Activated CD4-positive, alpha-beta memory T cell treated with anti-CD3 and anti-CD28 coated beads for 36 hours (primary cell): ENCODE measurements at regions of chr1 and their contacts with region 1.

Region 1: DNA sequence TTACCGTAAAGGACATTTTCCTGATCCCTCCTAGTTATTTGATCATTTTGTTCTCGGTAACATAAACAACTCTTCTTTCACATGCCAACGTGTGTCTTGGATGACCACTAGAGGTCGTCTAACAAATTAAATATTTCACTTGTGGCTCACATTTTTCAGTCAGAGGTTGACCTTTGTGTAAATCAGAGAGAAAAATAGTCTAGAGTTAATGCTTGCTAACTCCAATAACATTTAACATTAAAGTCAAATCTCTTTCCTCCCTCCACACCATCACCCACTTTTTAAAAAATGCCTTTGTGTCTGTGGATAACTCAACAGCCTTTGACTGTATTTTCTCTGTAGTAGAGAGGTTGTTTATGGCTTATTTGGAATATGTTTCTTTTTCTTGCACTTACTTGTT is 220.5 kb upstream of the B3GALT2 start:
- DNase-seq: no peak
- H3K4me3 Mint-ChIP-seq: no peak overlapping the region
- H3K27ac Mint-ChIP-seq: no peak overlapping the region
- H3K4me1 Mint-ChIP-seq: peaks cover 29% of the 10 kb centered on the region
- H3K27me3 Mint-ChIP-seq: no peaks in the 10 kb centered on the region

Region 2: DNA sequence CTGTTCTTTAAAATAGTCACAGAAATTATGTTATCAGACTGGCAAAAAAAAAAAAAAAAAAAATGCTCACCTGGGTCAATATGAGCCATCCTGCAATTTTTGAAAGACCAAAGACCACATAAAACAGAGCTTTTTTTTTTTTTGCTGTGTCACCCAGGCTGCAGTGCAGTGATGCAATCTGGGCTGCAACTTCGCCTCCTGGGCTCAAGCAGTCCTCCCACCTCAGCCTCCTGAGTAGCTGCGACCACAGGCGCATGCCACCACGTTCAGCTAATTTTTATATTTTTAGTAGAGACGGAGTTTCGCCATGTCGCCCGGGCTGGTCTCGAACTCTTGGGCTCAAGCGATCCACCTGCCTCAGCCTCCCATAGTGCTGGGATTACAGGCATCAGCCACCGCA is 708.2 kb before region 1 on chr1:
- CTCF ChIA-PET with region 1: no interaction called
- POLR2A ChIA-PET with region 1: no interaction called
- intact Hi-C with region 1: no loop called
- DNase-seq: no peak
- H3K4me3 Mint-ChIP-seq: no peak overlapping the region
- H3K27ac Mint-ChIP-seq: no peak overlapping the region
- H3K4me1 Mint-ChIP-seq: peaks cover 17% of the 10 kb centered on the region
- H3K27me3 Mint-ChIP-seq: peaks cover 7% of the 10 kb centered on the region

Region 3: GRCh38 chr1:193183019-193183627 is 223.8 kb before region 1 on chr1:
- CTCF ChIA-PET with region 1: interaction called, 3 read pairs
- POLR2A ChIA-PET with region 1: no interaction called
- intact Hi-C with region 1: loop called (anchors 5 kb)
- DNase-seq: no peak
- H3K4me3 Mint-ChIP-seq: no peak overlapping the region
- H3K27ac Mint-ChIP-seq: no peak overlapping the region
- H3K4me1 Mint-ChIP-seq: peaks cover 41% of the 10 kb centered on the region
- H3K27me3 Mint-ChIP-seq: no peaks in the 10 kb centered on the region

Region 4: GRCh38 chr1:193229141-193229561 is 177.8 kb before region 1 on chr1:
- CTCF ChIA-PET with region 1: no interaction called
- POLR2A ChIA-PET with region 1: no interaction called
- intact Hi-C with region 1: no loop called
- DNase-seq: no peak
- H3K4me3 Mint-ChIP-seq: no peak overlapping the region
- H3K27ac Mint-ChIP-seq: no peak overlapping the region
- H3K4me1 Mint-ChIP-seq: peaks cover 10% of the 10 kb centered on the region
- H3K27me3 Mint-ChIP-seq: no peaks in the 10 kb centered on the region

Region 5: DNA sequence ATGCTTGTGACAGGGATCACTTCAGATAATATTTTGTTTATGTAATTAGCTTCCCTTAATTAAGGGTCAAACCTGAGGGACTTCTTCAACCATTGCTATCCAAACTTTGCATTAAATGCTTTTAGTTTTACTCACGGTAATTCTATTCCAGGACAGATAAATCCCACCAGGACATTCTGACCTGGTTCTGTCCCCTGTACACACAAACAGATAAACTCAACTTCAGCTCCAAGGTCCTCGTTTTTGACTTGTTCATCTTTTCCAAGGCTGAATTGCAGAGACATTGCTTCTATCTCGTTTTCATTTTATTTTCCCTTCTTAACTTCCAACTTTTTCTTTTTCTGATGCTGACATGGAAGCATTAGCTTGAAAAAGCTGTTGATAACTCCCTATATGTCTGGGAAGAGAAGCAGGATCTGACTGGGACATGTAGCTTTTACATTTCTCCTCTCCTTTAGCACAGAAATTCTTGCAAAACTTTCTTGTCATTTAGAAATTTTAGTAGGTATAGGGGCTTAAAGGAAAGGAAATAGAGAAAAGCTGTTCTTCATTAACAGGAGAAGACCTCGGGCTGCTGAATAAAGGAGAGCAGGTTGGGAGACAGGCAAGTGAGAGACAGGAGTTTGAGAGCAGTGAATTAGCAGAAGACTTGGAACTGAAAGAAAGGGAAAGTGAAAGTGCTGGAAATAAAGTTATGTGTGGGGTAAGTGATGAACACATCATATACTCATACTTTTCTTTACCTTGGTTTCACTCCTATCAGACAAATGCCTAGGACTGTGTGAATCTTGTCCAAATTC is 11.2 kb after region 1 on chr1:
- CTCF ChIA-PET with region 1: no interaction called
- POLR2A ChIA-PET with region 1: no interaction called
- intact Hi-C with region 1: loop called (anchors 1 kb)
- DNase-seq: no peak
- H3K4me3 Mint-ChIP-seq: peak overlapping the region; percentile 21
- H3K27ac Mint-ChIP-seq: peak overlapping the region; percentile 24
- H3K4me1 Mint-ChIP-seq: peaks cover 30% of the 10 kb centered on the region
- H3K27me3 Mint-ChIP-seq: no peaks in the 10 kb centered on the region

Region 6: DNA sequence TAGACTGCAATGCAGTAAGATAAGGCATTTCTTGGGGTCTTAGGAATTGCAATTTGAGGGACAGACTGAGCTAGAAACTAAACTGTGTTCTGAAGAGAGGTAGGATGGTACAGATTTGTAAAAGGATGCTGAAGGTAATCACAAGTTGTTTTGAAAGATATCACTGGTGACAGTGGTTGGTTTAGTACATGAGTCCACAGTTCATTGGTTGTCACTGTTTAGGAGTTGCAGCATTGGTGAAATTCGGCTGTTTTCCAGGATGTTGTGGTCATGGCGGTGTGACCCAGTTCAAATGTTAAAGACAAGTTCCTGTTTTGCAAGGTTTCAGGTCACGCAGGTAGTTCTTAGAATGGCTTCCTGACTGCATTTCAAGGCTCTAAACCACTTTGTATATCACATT is 72.3 kb after region 1 on chr1:
- CTCF ChIA-PET with region 1: no interaction called
- POLR2A ChIA-PET with region 1: no interaction called
- intact Hi-C with region 1: loop called (anchors 1 kb)
- DNase-seq: peak; percentile 86
- H3K4me3 Mint-ChIP-seq: peak overlapping the region; percentile 11
- H3K27ac Mint-ChIP-seq: peak overlapping the region; percentile 81
- H3K4me1 Mint-ChIP-seq: peaks cover 53% of the 10 kb centered on the region
- H3K27me3 Mint-ChIP-seq: no peaks in the 10 kb centered on the region

Region 7: DNA sequence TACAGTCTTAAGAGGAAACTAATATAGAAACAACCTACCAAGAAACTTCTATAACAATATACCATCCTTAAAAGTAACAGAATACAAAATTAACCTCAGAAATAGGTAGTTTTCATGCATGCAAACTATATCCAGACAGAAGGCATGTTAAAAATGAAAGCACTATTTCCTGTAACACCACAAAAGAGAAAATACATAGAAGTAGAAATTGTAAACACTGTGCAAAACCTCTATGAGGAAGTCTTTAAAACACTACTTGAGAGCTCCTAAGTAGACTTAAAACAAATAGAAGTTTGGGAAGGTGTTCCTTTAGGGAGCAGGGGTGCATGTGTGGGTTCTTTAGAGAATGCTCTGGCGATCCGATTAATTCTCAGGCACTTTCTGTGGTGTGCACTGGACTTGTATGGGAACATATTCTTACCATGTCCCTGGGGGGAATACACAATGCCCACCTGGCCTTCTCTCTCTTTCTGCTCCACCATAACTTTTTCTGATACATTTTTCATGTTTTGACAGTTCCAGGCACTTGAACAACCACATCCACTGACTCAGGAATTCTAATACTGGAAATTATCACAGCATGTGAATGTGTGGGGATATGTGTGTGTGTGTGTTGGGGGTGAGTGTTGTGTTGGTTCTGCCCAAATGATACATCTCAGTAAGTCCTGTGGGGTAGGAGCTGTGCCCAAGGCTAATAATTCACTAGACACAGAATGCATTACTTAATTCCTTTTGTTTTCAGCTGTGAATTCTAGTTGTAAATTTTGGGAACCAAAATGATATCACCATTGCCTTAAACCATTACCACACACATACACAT is 645.8 kb after region 1 on chr1:
- CTCF ChIA-PET with region 1: interaction called, 3 read pairs
- POLR2A ChIA-PET with region 1: no interaction called
- intact Hi-C with region 1: loop called (anchors 5 kb)
- DNase-seq: no peak
- H3K4me3 Mint-ChIP-seq: peak overlapping the region; percentile 27
- H3K27ac Mint-ChIP-seq: peak overlapping the region; percentile 65
- H3K4me1 Mint-ChIP-seq: peaks cover 52% of the 10 kb centered on the region
- H3K27me3 Mint-ChIP-seq: no peaks in the 10 kb centered on the region